B cell (primary cell): ENCODE measurements at regions of chrX and their contacts with region 1.

Region 1: DNA sequence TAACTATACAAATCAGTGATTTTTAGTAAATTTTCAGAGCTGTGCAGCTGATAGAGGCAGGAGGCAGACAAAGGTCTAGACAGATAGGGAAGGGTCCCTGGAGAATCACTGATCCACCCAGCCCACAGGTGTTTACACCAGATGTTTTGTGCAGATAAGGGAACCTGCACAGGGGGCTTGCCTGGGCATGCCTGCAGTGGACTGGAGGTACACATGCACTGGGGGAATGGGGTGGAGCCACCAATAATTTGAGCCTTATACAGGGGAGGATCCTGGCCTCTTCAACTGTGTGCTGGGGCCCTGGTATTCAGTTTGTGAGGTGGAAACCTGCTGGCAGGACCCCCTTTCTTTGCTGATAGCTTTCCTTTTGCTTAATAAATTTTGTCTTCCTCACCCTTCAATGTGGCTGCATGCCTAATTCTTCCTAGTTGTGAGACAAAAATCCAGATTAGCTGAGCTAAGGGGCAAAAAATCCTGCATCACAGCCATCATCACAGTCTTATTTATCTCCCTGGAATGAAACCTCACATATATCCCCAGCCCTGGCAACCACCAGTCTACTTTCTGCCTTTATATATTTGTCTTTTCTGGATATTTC is 102.8 kb downstream of the KDM6A start:
- DNase-seq: no peak
- ATAC-seq: no peak
- H3K4me3 ChIP-seq: no peak overlapping the region
- H3K4me3 Mint-ChIP-seq: no peak overlapping the region
- H3K27ac ChIP-seq: no peak overlapping the region
- H3K27ac Mint-ChIP-seq: no peak overlapping the region
- H3K4me1 ChIP-seq: no peaks in the 10 kb centered on the region
- H3K4me1 Mint-ChIP-seq: peaks cover 10% of the 10 kb centered on the region
- H3K27me3 ChIP-seq: no peaks in the 10 kb centered on the region
- H3K27me3 Mint-ChIP-seq: no peaks in the 10 kb centered on the region
- CTCF ChIP-seq: no peak

Region 2: GRCh38 chrX:45011131-45011530 is 35.4 kb after region 1 on chrX:
- CTCF ChIA-PET with region 1: no interaction called
- POLR2A ChIA-PET with region 1: no interaction called
- intact Hi-C with region 1: loop called (anchors 5 kb)
- DNase-seq: no peak
- ATAC-seq: no peak
- H3K4me3 ChIP-seq: no peak overlapping the region
- H3K4me3 Mint-ChIP-seq: no peak overlapping the region
- H3K27ac ChIP-seq: no peak overlapping the region
- H3K27ac Mint-ChIP-seq: no peak overlapping the region
- H3K4me1 ChIP-seq: peaks cover 8 to 12% of the 10 kb centered on the region in 2 donors
- H3K4me1 Mint-ChIP-seq: peaks cover 34% of the 10 kb centered on the region
- H3K27me3 ChIP-seq: no peaks in the 10 kb centered on the region
- H3K27me3 Mint-ChIP-seq: no peaks in the 10 kb centered on the region
- CTCF ChIP-seq: no peak